ENCODE measurements at regions of chr17 and their contacts with region 1.

Region 1: DNA sequence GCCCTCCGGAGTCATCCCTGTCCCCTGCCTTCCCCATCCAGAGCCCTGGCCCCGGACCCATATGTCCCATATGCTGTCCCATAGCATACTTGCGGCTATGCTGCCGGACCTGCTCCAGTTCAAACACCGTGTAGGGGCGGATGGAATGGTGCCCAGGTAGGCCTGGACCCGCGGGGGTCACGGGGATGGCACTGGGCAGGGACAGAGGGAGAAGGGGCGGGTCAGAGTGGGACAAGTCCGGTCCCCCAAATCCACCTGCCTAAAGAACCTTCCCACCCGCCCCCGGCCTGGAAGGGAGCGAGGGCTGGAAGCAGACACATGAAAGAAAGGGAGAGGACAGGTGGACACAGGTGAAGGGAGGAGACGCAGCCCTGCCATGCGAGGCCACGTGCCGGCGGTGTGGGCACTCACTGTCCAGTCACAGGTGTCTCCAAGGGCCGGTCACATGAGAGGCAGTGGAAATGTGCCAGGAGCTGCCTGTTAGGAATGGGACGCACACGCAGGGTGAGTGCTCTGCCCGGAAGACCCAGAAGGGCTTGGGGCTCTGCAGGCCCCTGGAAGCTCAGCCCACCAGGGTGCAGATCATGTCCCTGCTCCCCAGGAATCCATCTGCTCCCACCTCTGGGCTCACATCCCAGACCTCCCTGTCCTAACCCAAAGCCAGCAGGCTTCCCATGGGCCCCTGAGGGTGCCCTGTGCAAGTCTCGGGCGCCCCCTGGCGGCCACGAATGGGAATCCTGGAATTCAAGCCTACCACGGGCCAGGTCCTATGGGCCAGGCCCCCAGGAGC is 14.0 kb downstream of the UBALD2 start:
- DNase-seq: peak; percentile 84
- ATAC-seq: peak; percentile 56
- H3K4me3 Mint-ChIP-seq: no peak overlapping the region
- H3K27ac Mint-ChIP-seq: no peak overlapping the region
- H3K4me1 Mint-ChIP-seq: peaks cover 35% of the 10 kb centered on the region
- H3K27me3 Mint-ChIP-seq: no peaks in the 10 kb centered on the region
- CTCF ChIP-seq: peak; percentile 83

Region 2: GRCh38 chr17:75978938-75979704 is 300.0 kb before region 1 on chr17 and contains the starts of genes ACOX1 and TEN1:
- CTCF ChIA-PET with region 1: no interaction called
- POLR2A ChIA-PET with region 1: interaction called, 10 read pairs
- intact Hi-C with region 1: no loop called
- DNase-seq: peak; percentile 91
- ATAC-seq: peak; percentile 94
- H3K4me3 Mint-ChIP-seq: peak within 1 kb of the TSS; percentile 100
- H3K27ac Mint-ChIP-seq: peak within 1 kb of the TSS; percentile 100
- H3K4me1 Mint-ChIP-seq: peaks cover 37% of the 10 kb centered on the region
- H3K27me3 Mint-ChIP-seq: no peaks in the 10 kb centered on the region
- CTCF ChIP-seq: no peak
- total RNA-seq, gene ACOX1: 23.3 and 25.8 TPM in 2 replicates
- total RNA-seq, gene TEN1: 22.7 and 23.2 TPM in 2 replicates

Region 3: GRCh38 chr17:76115138-76115754 is 163.9 kb before region 1 on chr17:
- CTCF ChIA-PET with region 1: interaction called, 228 read pairs
- POLR2A ChIA-PET with region 1: interaction called, 257 read pairs
- intact Hi-C with region 1: no loop called
- DNase-seq: no peak
- ATAC-seq: no peak
- H3K4me3 Mint-ChIP-seq: no peak overlapping the region
- H3K27ac Mint-ChIP-seq: no peak overlapping the region
- H3K4me1 Mint-ChIP-seq: no peaks in the 10 kb centered on the region
- H3K27me3 Mint-ChIP-seq: peaks cover 3% of the 10 kb centered on the region
- CTCF ChIP-seq: no peak

Region 4: DNA sequence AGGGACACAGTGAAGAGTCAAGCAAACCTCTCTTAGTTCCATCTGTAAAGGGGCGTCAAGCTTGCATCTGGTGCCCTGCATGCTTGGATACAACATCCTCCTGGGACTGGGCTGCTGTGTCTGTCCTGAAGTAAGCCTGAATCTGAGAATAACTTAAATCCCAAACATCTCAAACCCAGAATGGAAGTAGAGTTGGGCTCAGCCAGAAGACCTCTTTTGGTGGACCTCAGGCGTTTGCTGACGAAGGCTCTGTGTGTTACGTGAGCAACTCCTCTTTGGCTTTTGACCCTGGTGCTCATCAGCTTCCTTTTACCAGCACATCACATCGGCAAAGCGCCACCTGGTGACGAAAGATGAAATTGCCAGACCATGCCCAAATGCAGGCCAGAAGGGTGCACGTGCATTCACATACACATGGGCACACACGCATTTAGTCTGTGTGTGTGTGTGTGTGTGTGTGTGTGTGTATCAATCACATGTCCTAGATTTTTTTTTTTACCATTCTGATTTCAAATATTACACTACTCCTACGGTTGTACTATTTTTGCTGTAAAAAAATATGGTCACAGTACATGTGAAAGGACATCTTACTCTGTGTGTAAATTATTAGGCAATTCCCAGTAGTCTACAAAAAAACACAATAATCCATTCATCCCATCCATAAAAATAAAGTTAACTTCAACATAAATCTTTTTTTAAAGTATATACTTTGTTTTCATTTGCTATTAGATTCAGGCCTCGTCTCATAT is 97.0 kb before region 1 on chr17:
- CTCF ChIA-PET with region 1: interaction called, 99 read pairs
- POLR2A ChIA-PET with region 1: interaction called, 481 read pairs
- intact Hi-C with region 1: loop called (anchors 1 kb)
- DNase-seq: peak; percentile 87
- ATAC-seq: peak; percentile 97
- H3K4me3 Mint-ChIP-seq: no peak overlapping the region
- H3K27ac Mint-ChIP-seq: no peak overlapping the region
- H3K4me1 Mint-ChIP-seq: peaks cover 34% of the 10 kb centered on the region
- H3K27me3 Mint-ChIP-seq: no peaks in the 10 kb centered on the region
- CTCF ChIP-seq: peak; percentile 21

Region 5: DNA sequence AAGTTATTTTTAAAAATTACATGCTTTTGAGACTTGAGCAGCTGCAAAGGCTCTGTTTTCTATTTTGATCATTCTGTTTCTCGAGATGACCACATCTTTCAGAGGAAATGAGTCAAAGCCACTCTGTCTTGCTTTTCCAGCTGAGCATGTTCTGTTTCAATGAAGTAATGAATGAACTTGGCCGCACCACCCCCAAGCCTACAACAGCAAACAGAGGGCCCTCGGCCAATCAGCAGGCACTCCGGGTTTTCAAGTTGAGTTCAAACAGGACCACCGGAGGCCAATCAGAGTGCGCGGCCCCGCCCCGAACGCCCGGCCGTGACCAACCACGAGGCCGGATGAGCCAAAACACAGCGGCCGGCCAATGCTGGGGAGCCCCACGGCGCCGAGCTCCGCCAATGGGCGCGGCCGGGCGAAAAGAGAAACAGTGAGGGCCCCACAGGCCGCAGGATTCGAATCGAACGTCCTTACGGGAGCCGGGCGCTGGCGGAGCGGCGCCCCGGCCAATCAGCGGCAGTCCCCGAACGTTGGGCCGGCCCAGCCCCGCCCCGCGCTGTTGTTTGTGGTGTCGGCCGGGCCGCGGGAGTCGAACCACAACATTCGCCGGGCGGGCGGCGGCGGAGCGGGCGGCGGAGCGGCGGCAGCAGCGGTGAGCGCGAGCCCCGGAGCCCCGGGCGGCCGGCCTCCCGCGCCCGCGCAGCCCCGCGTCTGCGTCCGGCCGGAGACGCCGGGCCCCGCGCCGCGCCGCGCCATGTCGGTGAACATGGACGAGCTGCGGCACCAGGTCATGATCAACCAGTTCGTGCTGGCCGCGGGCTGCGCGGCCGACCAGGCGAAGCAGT is 14.2 kb before region 1 on chr17 and contains the start of gene UBALD2:
- CTCF ChIA-PET with region 1: interaction called, 28 read pairs
- POLR2A ChIA-PET with region 1: interaction called, 462 read pairs
- intact Hi-C with region 1: loop called (anchors 1 kb)
- DNase-seq: peak; percentile 97
- ATAC-seq: peak; percentile 77
- H3K4me3 Mint-ChIP-seq: peak within 1 kb of the TSS; percentile 92
- H3K27ac Mint-ChIP-seq: peak within 1 kb of the TSS; percentile 94
- H3K4me1 Mint-ChIP-seq: peaks cover 80% of the 10 kb centered on the region
- H3K27me3 Mint-ChIP-seq: no peaks in the 10 kb centered on the region
- CTCF ChIP-seq: no peak
- total RNA-seq, gene UBALD2: 144 and 152 TPM in 2 replicates

Region 6: GRCh38 chr17:76452660-76453430 is 173.7 kb after region 1 on chr17 and contains the start of gene UBE2O:
- CTCF ChIA-PET with region 1: no interaction called
- POLR2A ChIA-PET with region 1: no interaction called
- intact Hi-C with region 1: no loop called
- DNase-seq: peak; percentile 95
- ATAC-seq: peak; percentile 94
- H3K4me3 Mint-ChIP-seq: peak within 1 kb of the TSS; percentile 83
- H3K27ac Mint-ChIP-seq: peak within 1 kb of the TSS; percentile 87
- H3K4me1 Mint-ChIP-seq: peaks cover 39% of the 10 kb centered on the region
- H3K27me3 Mint-ChIP-seq: no peaks in the 10 kb centered on the region
- CTCF ChIP-seq: no peak
- total RNA-seq, gene UBE2O: 39.0 and 40.3 TPM in 2 replicates

Measured in activated B cell treated with CpG ODN at 0.5 μM for 24 hours (primary cell).